ENCODE measurements at regions of chr7 and their contacts with region 1.

Region 1: GRCh38 chr7:44489955-44490350 is 505 bp downstream of the NUDCD3 start:
- DNase-seq: no peak
- ATAC-seq: peak; percentile 1 to 50 (median 16)
- H3K4me3 ChIP-seq: peak overlapping the region; percentile 80 to 92 (median 85)
- H3K27ac ChIP-seq: peak overlapping the region; percentile 95 to 100 (median 98)
- H3K4me1 ChIP-seq: peaks cover 0 to 54% (median 47%) of the 10 kb centered on the region in 9 donors
- H3K27me3 ChIP-seq: peaks cover 0 to 7% (median 0%) of the 10 kb centered on the region in 7 donors
- CTCF ChIP-seq: no peak

Region 2: GRCh38 chr7:44573464-44574286 is 83.7 kb after region 1 on chr7 and contains the start of gene DDX56:
- intact Hi-C with region 1: loop called in 2 of 10 experiments (anchors 5 to 10 kb)
- DNase-seq: peak; percentile 94 to 95
- ATAC-seq: peak; percentile 95 to 99 (median 98)
- H3K4me3 ChIP-seq: peak within 1 kb of the TSS; percentile 47 to 93 (median 75)
- H3K27ac ChIP-seq: peak within 1 kb of the TSS; percentile 33 to 93 (median 90)
- H3K4me1 ChIP-seq: peaks cover 3 to 32% (median 26%) of the 10 kb centered on the region in 9 donors
- H3K27me3 ChIP-seq: no peaks in the 10 kb centered on the region
- CTCF ChIP-seq: no peak
- total RNA-seq, gene DDX56: 23.2 to 40.7 (median 27.4) TPM